HEK293T (cell line): ENCODE measurements at regions of chr16 and their contacts with region 1.

Region 1: DNA sequence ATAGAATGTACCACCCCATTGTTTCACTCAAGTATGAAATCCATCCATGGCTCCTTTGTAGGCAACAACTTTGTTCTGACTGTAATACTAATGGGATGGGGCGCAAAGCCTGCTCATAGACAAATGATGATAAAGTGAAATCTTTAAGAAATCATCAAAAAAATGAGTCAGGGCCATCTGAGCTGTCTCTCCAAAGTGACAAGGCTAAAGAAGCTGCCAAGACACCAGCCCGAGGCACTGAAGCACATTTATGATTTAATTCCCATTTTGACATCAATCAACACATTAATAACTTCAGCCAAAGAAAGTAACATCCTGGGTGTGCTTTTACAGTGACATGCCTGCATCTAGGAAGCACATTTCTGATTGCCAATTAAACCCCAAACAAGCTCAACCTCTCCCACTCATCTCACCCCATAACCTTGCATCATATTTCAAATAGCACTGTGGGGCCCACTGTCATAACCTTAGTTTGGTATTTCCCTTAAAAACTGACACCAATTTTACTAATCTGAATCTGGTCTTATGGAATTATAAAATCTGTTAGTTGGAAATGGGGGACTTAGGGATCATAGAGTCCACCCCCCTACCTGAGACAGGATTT is 676.6 kb downstream of the TOX3 start:
- DNase-seq: no peak

Region 2: DNA sequence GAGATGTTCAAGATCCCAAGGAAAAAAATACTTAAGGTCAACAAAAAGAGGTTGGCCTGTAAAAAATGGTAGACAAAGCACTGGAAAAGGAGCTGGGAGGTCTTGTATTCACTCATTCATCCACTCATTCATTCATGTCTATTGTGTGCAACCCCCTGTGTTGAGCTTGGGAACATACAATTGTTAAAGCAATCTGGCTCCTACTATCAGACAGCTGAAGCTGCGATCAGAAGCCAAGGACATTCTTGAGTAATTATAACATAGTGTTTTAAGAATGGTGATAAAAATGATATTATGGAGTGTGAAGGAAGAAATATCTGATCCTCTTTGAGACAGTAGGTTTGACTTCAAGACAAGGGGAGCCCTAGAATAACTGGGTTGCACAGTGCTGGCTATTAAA is 16.8 kb before region 1 on chr16:
- CTCF ChIA-PET with region 1: interaction called, 12 read pairs
- POLR2A ChIA-PET with region 1: no interaction called
- DNase-seq: no peak